ENCODE measurements at regions of chrX and their contacts with region 1.

Region 1: GRCh38 chrX:15929194-15929593 is 74.6 kb upstream of the AP1S2 start:
- DNase-seq: no peak
- H3K4me3 ChIP-seq: no peak overlapping the region
- H3K4me1 ChIP-seq: peaks cover 3% of the 10 kb centered on the region; the same call in 1 of the 2 replicates
- H3K27me3 ChIP-seq: peaks cover 14% of the 10 kb centered on the region

Region 2: DNA sequence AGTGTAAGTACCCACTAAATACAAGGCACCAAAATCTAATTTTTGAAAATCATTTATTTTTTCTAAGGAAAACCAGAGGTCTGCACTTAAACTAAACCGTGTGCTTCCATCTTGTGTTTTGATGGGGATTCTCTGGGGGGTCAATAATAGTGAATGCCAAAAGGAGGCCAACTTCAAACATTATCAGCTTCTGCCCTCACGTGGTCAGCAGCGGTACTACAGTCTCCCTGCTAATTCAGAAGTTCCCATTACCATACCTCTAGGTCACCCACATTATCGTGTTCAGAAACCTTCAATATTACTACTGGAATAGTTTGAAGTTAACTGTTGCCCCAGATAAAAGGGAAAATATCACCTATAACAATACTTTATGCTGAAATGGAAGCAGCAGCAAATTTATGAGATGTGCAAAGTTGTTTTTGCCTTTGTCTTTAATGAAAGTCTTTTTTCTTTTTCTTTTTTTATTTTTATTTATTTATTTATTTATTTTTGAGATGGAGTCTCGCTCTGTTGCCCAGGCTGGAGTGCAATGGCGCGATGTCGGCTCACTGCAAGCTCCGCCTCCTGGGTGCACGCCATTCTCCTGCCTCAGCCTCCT is 766.0 kb after region 1 on chrX:
- in situ Hi-C with region 1: loop called (anchors 10 kb)
- DNase-seq: peak; percentile 56 to 84
- H3K4me3 ChIP-seq: no peak overlapping the region
- H3K4me1 ChIP-seq: no peaks in the 10 kb centered on the region
- H3K27me3 ChIP-seq: no peaks in the 10 kb centered on the region